Activated CD4-positive, alpha-beta T cell treated with anti-CD3 and anti-CD28 coated beads, Interleukin-2, amount 10 ng/mL, durations not matched to agents 7 days and 5 days (primary cell): ENCODE measurements at regions of chr1 and their contacts with region 1.

Region 1: DNA sequence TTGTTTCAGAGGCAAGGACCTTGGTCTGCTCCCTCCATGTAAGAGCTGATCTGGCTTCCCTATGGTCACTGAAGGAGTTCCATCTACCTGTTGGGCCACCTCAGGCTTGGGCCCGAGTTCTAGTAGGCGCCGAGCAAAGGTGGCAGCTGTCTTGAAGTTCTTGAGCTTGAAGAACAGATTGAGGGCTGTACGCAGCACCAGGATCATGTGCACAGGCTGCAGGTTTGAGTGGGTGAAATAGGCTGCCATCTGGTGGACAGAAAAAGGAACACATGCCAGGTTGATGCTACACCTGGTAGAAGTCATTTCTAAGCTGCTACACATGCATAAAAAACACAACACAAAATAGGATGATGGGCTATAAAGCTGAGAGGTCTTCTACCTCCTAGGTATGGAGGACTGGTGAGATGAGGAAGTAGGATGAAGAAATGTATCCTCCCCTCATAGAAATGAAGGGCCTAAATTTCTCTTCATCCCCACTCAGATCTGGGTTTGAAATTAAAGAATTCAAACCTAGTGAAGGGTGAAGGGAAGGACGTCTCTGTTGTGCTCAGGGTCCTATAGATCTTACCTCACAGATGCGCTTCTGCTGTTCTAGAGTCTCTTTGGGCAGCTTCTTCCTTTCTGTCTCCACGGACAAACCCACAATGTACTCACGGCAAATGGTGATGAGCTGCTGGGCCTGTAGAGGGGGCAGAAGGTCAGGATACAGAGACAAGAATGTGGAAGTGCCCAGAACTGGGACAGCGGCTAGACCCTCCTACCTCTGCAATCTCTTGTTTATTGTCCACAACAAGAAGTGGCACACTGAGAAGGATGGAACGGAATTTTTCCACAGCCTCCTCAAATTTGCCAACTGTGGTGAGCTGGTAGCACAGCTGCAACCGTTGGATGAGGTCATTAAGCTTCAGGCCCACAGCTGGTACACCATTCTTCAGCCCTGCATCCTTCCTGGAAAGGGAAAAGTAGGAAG is 6.6 kb upstream of the PEX19 start:
- DNase-seq: peak; percentile 80
- H3K4me3 Mint-ChIP-seq: no peak overlapping the region
- H3K27ac Mint-ChIP-seq: no peak overlapping the region
- H3K4me1 Mint-ChIP-seq: no peaks in the 10 kb centered on the region
- H3K27me3 Mint-ChIP-seq: no peaks in the 10 kb centered on the region

Region 2: DNA sequence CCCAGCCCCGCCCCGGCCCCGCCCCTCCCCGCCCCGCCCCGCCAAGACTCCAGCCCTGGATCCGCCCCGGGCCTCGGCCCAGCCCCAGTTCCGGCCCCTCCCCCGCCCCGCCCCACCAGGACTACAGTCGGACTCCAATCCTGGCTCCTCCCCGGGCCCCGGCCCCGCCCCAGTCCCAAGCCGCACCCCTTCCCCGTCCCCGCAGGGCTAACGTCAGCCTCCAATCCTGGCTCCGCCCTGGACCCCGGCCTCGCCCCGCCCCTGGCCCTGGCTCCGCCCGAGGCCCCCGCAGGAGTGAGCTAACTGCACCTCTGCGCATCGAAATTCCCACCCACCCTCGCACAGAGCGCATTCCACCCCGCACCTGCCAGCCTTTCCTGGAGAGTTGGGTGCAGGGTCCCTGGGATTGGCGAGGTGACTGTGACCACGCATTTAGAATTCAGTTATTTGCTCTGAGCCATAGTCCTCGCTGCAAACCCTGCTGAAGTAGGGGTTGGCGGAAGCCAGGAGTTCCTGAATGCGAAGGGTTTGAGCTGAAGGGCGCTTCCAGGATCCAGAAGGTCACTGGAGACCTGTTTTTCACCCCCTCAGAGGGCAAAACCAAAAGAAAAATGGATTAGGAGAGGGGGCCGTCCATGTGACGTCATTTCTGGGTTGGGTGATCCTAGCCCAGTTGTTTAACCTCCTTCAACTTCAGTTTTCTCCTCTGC is 192.5 kb before region 1 on chr1:
- CTCF ChIA-PET with region 1: interaction called, 14 read pairs
- POLR2A ChIA-PET with region 1: no interaction called
- DNase-seq: peak; percentile 98
- H3K4me3 Mint-ChIP-seq: peak overlapping the region; percentile 77
- H3K27ac Mint-ChIP-seq: peak overlapping the region; percentile 94
- H3K4me1 Mint-ChIP-seq: peaks cover 49% of the 10 kb centered on the region
- H3K27me3 Mint-ChIP-seq: no peaks in the 10 kb centered on the region

Region 3: GRCh38 chr1:160193091-160193819 is 98.3 kb before region 1 on chr1:
- CTCF ChIA-PET with region 1: interaction called, 21 read pairs
- POLR2A ChIA-PET with region 1: no interaction called
- DNase-seq: peak; percentile 85
- H3K4me3 Mint-ChIP-seq: no peak overlapping the region
- H3K27ac Mint-ChIP-seq: no peak overlapping the region
- H3K4me1 Mint-ChIP-seq: no peaks in the 10 kb centered on the region
- H3K27me3 Mint-ChIP-seq: peaks cover 4% of the 10 kb centered on the region

Region 4: GRCh38 chr1:160217481-160218051 is 74.0 kb before region 1 on chr1:
- CTCF ChIA-PET with region 1: no interaction called
- POLR2A ChIA-PET with region 1: no interaction called
- DNase-seq: no peak
- H3K4me3 Mint-ChIP-seq: no peak overlapping the region
- H3K27ac Mint-ChIP-seq: no peak overlapping the region
- H3K4me1 Mint-ChIP-seq: no peaks in the 10 kb centered on the region
- H3K27me3 Mint-ChIP-seq: no peaks in the 10 kb centered on the region

Region 5: DNA sequence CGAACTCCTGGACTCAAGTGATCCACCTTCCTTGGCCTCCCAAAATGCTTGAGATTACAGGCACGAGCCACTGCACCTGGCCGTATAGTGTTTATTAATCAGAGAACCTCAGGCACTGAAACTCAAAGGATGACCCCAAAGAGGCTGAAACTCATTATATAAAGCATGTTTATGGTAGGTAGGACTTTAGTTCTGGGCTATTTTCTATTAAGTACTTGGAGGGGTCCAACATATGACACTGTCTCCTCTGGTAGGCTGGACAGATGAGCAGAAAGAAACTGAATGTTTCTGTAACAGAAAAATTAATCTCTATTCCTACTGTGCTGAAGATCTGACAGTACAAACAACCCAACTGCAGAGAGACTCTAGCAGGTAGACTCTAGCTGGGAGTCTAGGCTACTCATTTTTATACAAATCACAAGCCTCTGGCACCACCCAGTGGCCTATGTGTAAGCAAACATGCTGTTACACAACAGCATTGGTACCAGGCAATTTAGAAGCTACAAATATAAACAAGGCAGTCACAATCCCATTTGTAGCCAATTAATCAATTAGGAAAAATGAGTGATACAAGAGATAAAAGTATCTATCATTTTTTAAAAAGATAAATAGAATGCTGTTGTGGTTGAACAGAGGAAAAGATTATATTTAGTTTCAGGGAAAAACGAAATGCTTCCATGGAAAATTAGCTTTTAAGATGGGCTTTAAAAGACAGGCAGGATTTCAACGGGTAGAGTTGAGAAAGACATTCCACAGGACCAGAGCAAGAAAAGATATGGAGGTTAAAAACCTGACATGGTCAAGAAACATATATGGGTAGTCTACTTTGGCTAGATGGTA is 39.6 kb before region 1 on chr1:
- CTCF ChIA-PET with region 1: interaction called, 11 read pairs
- POLR2A ChIA-PET with region 1: no interaction called
- DNase-seq: peak; percentile 74
- H3K4me3 Mint-ChIP-seq: no peak overlapping the region
- H3K27ac Mint-ChIP-seq: no peak overlapping the region
- H3K4me1 Mint-ChIP-seq: peaks cover 8% of the 10 kb centered on the region
- H3K27me3 Mint-ChIP-seq: no peaks in the 10 kb centered on the region

Region 6: GRCh38 chr1:160261893-160262794 is 29.4 kb before region 1 on chr1 and contains the start of gene DCAF8:
- CTCF ChIA-PET with region 1: interaction called, 16 read pairs
- POLR2A ChIA-PET with region 1: no interaction called
- DNase-seq: peak; percentile 99
- H3K4me3 Mint-ChIP-seq: peak within 1 kb of the TSS; percentile 99
- H3K27ac Mint-ChIP-seq: peak within 1 kb of the TSS; percentile 98
- H3K4me1 Mint-ChIP-seq: peaks cover 47% of the 10 kb centered on the region
- H3K27me3 Mint-ChIP-seq: no peaks in the 10 kb centered on the region
- total RNA-seq, gene DCAF8: 112 to 117 TPM

Region 7: GRCh38 chr1:160307118-160307854 is 15.8 kb after region 1 on chr1:
- CTCF ChIA-PET with region 1: interaction called, 11 read pairs
- POLR2A ChIA-PET with region 1: no interaction called
- DNase-seq: no peak
- H3K4me3 Mint-ChIP-seq: no peak overlapping the region
- H3K27ac Mint-ChIP-seq: no peak overlapping the region
- H3K4me1 Mint-ChIP-seq: no peaks in the 10 kb centered on the region
- H3K27me3 Mint-ChIP-seq: no peaks in the 10 kb centered on the region

Region 8: GRCh38 chr1:160416369-160416768 is 124.8 kb after region 1 on chr1:
- CTCF ChIA-PET with region 1: no interaction called
- POLR2A ChIA-PET with region 1: no interaction called
- DNase-seq: no peak
- H3K4me3 Mint-ChIP-seq: no peak overlapping the region
- H3K27ac Mint-ChIP-seq: no peak overlapping the region
- H3K4me1 Mint-ChIP-seq: no peaks in the 10 kb centered on the region
- H3K27me3 Mint-ChIP-seq: peaks cover 4% of the 10 kb centered on the region